ENCODE measurements at regions of chr6 and their contacts with region 1.

Region 1: GRCh38 chr6:106981926-106982325 is 7.4 kb upstream of the CD24 start:
- DNase-seq: no peak
- H3K4me3 ChIP-seq: no peak overlapping the region
- H3K27ac ChIP-seq: no peak overlapping the region
- H3K4me1 ChIP-seq: peaks cover 0 to 12% (median 2%) of the 10 kb centered on the region in 4 donors
- H3K27me3 ChIP-seq: peaks cover 0 to 51% (median 0%) of the 10 kb centered on the region in 3 donors
- CTCF ChIP-seq: no peak
- EP300 ChIP-seq: no peak
- POLR2A ChIP-seq: no peak

Region 2: DNA sequence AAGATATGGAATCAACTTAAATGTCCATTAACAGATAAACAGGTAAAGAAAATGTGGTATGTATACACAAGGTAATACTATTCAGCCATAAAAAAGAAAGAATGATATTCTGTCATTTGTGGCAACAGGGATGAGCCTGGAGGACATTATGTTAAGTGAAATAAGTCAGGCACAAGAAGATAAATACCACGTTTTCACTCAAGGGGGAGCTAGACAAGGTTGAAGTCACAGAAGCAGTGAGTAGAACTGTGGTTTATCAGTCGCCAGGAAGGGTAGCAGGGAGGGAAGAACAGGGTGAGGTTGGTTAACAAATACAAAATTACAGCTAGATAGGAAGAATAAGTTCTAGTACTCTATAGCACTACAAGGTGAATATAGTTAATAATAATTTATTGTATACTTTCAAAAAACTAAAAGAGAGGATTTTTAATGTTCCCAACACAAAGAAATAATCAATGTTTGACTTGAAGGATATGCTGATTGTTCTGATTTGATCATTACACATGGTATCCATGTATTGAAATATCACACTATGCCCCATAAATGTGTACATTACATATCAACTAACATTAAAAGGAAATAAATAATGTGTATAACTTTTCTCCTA is 373.8 kb before region 1 on chr6:
- intact Hi-C with region 1: loop called (anchors 10 kb)
- DNase-seq: peak in 1 of 2 donors; percentile 81
- H3K4me3 ChIP-seq: no peak overlapping the region
- H3K27ac ChIP-seq: no peak overlapping the region
- H3K4me1 ChIP-seq: no peaks in the 10 kb centered on the region
- H3K27me3 ChIP-seq: no peaks in the 10 kb centered on the region
- CTCF ChIP-seq: peak in 5 of 7 experiments; percentile 45 to 91 (median 54)
- EP300 ChIP-seq: no peak
- POLR2A ChIP-seq: no peak

Region 3: GRCh38 chr6:108501559-108501958 is 1519.6 kb after region 1 on chr6:
- intact Hi-C with region 1: no loop called
- DNase-seq: no peak
- H3K4me3 ChIP-seq: no peak overlapping the region
- H3K27ac ChIP-seq: no peak overlapping the region
- H3K4me1 ChIP-seq: no peaks in the 10 kb centered on the region
- H3K27me3 ChIP-seq: no peaks in the 10 kb centered on the region
- CTCF ChIP-seq: no peak
- EP300 ChIP-seq: no peak
- POLR2A ChIP-seq: no peak